ENCODE measurements at regions of chr22 and their contacts with region 1.

Region 1: DNA sequence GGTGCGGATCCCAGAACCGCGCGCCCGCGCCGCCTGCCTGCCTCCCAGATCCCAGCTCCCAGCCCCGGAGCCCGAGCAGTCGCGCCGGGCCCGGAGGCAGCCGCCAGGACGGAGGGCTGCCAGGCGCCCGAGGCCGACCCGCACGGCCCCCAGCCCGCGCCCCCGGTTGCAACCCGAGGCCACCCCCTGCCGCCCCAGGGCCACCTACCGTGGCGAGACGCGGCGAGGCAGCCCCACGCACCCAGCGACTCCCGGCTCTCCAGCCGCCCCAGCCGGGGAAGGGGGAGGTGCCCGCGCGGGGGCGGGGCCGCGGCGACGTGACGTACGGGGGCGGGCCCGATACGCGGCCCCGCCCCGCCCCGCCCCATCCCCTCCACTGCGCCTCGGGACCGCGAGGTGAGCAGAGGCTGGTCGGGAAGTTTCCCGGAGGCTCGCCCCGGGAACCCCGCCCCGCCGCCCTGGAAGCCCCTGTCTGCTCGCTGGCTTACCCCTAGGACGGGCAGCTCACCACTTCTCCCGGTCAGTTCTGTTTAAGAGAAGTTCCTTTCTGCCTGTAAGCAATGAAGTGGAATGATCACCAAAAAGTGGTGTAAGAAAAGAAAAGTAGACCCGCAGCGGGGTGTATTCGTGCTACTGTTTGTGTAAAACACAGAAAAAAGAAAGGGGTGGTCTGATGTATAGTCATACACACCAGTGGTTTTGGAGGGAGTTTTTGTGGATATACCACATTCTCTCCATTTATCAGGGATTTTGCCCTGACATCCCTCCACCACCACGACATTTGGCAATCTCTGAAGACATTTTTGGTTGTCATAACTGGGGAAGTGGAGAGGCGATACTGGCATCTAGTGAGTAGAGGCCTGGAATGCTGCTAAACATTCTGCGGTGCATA is at the start of gene TPST2:
- DNase-seq: peak; percentile 70 to 90 (median 76)
- ATAC-seq: peak; percentile 95
- H3K4me3 ChIP-seq: peak within 1 kb of the TSS; percentile 92
- H3K4me3 Mint-ChIP-seq: peak within 1 kb of the TSS; percentile 90 to 97 (median 94)
- H3K27ac ChIP-seq: peak within 1 kb of the TSS; percentile 79
- H3K27ac Mint-ChIP-seq: peak within 1 kb of the TSS; percentile 85 to 93 (median 91)
- H3K4me1 ChIP-seq: peaks cover 40 to 53% of the 10 kb centered on the region in 2 donors
- H3K4me1 Mint-ChIP-seq: peaks cover 32 to 79% (median 73%) of the 10 kb centered on the region in 7 donors
- H3K27me3 ChIP-seq: no peaks in the 10 kb centered on the region
- H3K27me3 Mint-ChIP-seq: no peaks in the 10 kb centered on the region
- total RNA-seq, gene TPST2: 16.7 to 44.8 (median 20.6) TPM

Region 2: GRCh38 chr22:26428515-26429457 is 161.3 kb before region 1 on chr22 and contains the start of gene ASPHD2:
- CTCF ChIA-PET with region 1: no interaction called
- POLR2A ChIA-PET with region 1: no interaction called
- intact Hi-C with region 1: loop called (anchors 2 to 5 kb)
- DNase-seq: peak; percentile 72 to 87 (median 83)
- ATAC-seq: peak; percentile 92
- H3K4me3 ChIP-seq: peak within 1 kb of the TSS; percentile 93
- H3K4me3 Mint-ChIP-seq: peak within 1 kb of the TSS; percentile 91 to 99 (median 99)
- H3K27ac ChIP-seq: peak within 1 kb of the TSS; percentile 88
- H3K27ac Mint-ChIP-seq: peak within 1 kb of the TSS; percentile 94 to 99 (median 98)
- H3K4me1 ChIP-seq: peaks cover 8 to 17% of the 10 kb centered on the region in 2 donors
- H3K4me1 Mint-ChIP-seq: peaks cover 14 to 55% (median 33%) of the 10 kb centered on the region in 7 donors
- H3K27me3 ChIP-seq: no peaks in the 10 kb centered on the region
- H3K27me3 Mint-ChIP-seq: peaks cover 0 to 22% (median 5%) of the 10 kb centered on the region in 5 donors
- total RNA-seq, gene ASPHD2: 1.8 to 18.1 (median 2.7) TPM

Region 3: GRCh38 chr22:26502688-26503561 is 87.2 kb before region 1 on chr22:
- CTCF ChIA-PET with region 1: interaction called, 6 read pairs
- POLR2A ChIA-PET with region 1: no interaction called
- intact Hi-C with region 1: loop called in 1 of 2 experiments (anchors 1 kb)
- DNase-seq: peak; percentile 15 to 60 (median 45)
- ATAC-seq: peak; percentile 95
- H3K4me3 ChIP-seq: no peak overlapping the region
- H3K4me3 Mint-ChIP-seq: peak overlapping the region; percentile 28 to 76 (median 58)
- H3K27ac ChIP-seq: peak overlapping the region; percentile 32
- H3K27ac Mint-ChIP-seq: peak overlapping the region; percentile 28 to 87 (median 65)
- H3K4me1 ChIP-seq: peaks cover 13 to 20% of the 10 kb centered on the region in 2 donors
- H3K4me1 Mint-ChIP-seq: peaks cover 16 to 30% (median 25%) of the 10 kb centered on the region in 7 donors
- H3K27me3 ChIP-seq: no peaks in the 10 kb centered on the region
- H3K27me3 Mint-ChIP-seq: no peaks in the 10 kb centered on the region

Region 4: DNA sequence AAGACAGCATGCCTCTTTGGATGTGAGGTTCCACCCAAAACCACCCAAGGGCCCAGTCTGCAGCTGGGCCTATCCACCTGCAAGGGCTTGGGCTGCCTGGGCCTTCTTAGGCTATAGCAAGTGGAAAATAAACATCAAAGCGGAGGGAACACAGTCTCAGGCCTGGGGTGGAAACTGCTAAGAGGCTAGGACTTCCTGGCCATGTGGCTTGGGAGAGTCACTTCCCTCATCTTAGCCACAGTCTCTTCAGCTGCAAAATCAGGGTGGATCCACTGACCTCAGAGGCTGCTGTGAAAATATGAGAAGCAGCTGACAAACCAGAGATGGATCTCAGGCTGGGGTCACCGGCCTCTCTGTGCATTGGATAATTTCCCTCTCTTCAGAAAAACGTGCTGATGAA is 47.3 kb before region 1 on chr22:
- CTCF ChIA-PET with region 1: no interaction called
- POLR2A ChIA-PET with region 1: interaction called, 3 read pairs
- intact Hi-C with region 1: loop called in 1 of 2 experiments (anchors 5 kb)
- DNase-seq: no peak
- ATAC-seq: peak; percentile 79
- H3K4me3 ChIP-seq: no peak overlapping the region
- H3K4me3 Mint-ChIP-seq: no peak overlapping the region
- H3K27ac ChIP-seq: no peak overlapping the region
- H3K27ac Mint-ChIP-seq: peak overlapping the region in 5 of 9 donors; percentile 12 to 49 (median 42)
- H3K4me1 ChIP-seq: peaks cover 0 to 13% of the 10 kb centered on the region in 2 donors
- H3K4me1 Mint-ChIP-seq: peaks cover 4 to 51% (median 13%) of the 10 kb centered on the region in 7 donors
- H3K27me3 ChIP-seq: no peaks in the 10 kb centered on the region
- H3K27me3 Mint-ChIP-seq: no peaks in the 10 kb centered on the region

Region 5: GRCh38 chr22:26579331-26579886 is 10.7 kb before region 1 on chr22:
- CTCF ChIA-PET with region 1: no interaction called
- POLR2A ChIA-PET with region 1: interaction called, 6 read pairs
- intact Hi-C with region 1: loop called in 1 of 2 experiments (anchors 1 kb)
- DNase-seq: peak; percentile 31 to 55 (median 49)
- ATAC-seq: peak; percentile 93
- H3K4me3 ChIP-seq: peak overlapping the region; percentile 53
- H3K4me3 Mint-ChIP-seq: peak overlapping the region; percentile 56 to 88 (median 79)
- H3K27ac ChIP-seq: peak overlapping the region; percentile 69
- H3K27ac Mint-ChIP-seq: peak overlapping the region; percentile 87 to 96 (median 92)
- H3K4me1 ChIP-seq: peaks cover 26 to 47% of the 10 kb centered on the region in 2 donors
- H3K4me1 Mint-ChIP-seq: peaks cover 46 to 67% (median 58%) of the 10 kb centered on the region in 7 donors
- H3K27me3 ChIP-seq: no peaks in the 10 kb centered on the region
- H3K27me3 Mint-ChIP-seq: no peaks in the 10 kb centered on the region

Region 6: DNA sequence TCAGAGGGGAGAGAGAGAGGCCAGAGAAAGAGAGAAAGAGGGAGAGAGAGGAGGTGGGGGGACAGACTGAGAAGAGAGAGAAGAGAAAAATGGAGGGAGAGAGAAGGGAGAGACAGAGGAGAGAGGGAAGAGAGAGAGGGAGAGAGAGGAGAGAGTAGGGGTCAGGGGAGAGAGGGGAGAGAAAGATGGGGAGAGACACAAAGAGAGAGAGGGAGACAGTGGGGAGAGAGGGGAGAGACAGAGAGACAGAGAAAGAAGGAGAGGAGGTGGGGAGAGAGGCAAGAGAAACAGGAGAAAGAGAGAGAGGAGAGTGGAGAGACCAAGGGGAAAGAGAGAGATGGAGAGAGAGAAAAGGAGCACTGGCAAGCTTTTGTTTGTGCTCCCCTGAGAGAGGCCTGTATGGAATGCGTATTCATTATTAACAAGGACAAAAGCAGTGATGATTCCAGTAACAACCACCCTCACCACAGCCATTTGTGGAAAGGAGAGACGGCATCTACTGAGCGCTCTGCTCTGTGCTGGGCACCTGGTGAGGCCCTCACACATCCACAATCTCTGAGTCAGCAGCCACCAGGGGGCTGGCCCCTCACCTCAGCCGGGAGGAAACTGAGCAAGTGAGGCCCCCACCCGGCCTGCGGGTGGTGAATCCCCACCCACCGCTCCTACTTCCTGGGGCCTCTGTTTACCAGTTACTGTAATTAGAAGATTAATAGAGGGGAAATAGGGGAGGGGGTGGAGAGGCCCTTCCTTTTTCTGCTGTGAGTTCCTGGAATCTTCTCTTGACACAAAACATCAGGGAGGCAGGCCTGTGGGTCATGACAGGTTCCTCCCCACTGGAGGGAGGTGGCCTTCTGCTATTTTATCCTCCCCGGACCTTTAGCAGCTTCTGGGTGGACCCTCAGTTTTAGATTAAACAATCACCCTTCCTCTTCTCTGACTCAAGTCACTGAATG is 52.6 kb after region 1 on chr22:
- CTCF ChIA-PET with region 1: interaction called, 3 read pairs
- POLR2A ChIA-PET with region 1: interaction called, 5 read pairs
- intact Hi-C with region 1: loop called in 1 of 2 experiments (anchors 1 kb)
- DNase-seq: peak in 1 of 9 donors; percentile 83
- ATAC-seq: peak; percentile 69
- H3K4me3 ChIP-seq: no peak overlapping the region
- H3K4me3 Mint-ChIP-seq: peak overlapping the region; percentile 17 to 78 (median 48)
- H3K27ac ChIP-seq: peak overlapping the region; percentile 53
- H3K27ac Mint-ChIP-seq: peak overlapping the region; percentile 59 to 97 (median 87)
- H3K4me1 ChIP-seq: peaks cover 36 to 59% of the 10 kb centered on the region in 2 donors
- H3K4me1 Mint-ChIP-seq: peaks cover 39 to 77% (median 49%) of the 10 kb centered on the region in 7 donors
- H3K27me3 ChIP-seq: no peaks in the 10 kb centered on the region
- H3K27me3 Mint-ChIP-seq: no peaks in the 10 kb centered on the region